A549 (cell line): ENCODE measurements at regions of chr1 and their contacts with region 1.

Region 1: GRCh38 chr1:28877132-28877781 is 37.1 kb upstream of the EPB41 start:
- DNase-seq: peak; percentile 66 to 73
- ATAC-seq: peak; percentile 80 to 86
- H3K4me3 ChIP-seq: no peak overlapping the region
- H3K27ac ChIP-seq: no peak overlapping the region
- H3K4me1 ChIP-seq: peaks cover 6% of the 10 kb centered on the region; the same call in 2 of the 3 replicates
- CTCF ChIP-seq: peak; percentile 73
- EP300 ChIP-seq: no peak
- POLR2A ChIP-seq: no peak
- RAD21 ChIP-seq: peak; percentile 92 to 97

Region 2: DNA sequence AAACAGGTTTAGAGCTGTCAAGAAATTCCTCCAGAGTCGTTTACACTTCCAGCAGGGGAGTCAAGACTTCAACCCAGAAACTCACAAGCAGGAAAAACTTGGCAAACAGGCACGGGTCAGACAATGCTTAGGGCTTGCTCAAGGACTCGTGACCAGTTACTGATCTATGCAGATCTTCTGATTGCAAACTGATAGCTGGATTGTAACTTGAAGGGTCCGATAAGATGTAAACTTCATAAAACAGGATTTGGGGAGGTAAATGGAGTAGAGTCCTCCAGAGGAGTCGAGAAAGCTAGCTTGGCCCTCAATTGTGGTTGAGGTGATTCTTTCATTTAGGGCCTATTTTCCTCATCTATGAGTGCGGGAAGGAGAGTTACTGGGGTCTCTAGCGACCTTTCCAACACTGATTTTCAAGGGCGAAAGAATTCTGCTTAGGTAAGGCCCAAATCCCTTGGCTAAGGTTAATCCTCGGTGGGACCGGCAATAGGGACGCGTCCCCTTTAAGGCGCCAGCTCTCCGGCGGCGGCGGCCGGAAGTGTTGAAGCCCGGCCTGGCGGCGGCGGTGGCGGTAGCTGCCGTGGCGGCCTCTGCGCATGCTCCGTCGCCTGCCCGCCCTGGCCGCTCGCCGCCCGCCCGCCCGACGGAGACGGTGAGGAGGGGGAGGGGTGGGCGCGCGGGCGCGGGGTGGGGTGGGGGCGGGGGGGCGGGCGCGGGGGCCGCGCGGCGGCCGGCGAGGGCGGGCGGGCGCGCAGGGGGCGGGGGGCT is 208.9 kb before region 1 on chr1 and contains the start of gene GMEB1:
- CTCF ChIA-PET with region 1: interaction called, 6 read pairs
- POLR2A ChIA-PET with region 1: interaction called, 13 read pairs
- DNase-seq: peak; percentile 69 to 87
- ATAC-seq: peak; percentile 89 to 94
- H3K4me3 ChIP-seq: peak within 1 kb of the TSS; percentile 100
- H3K27ac ChIP-seq: peak within 1 kb of the TSS; percentile 100
- H3K4me1 ChIP-seq: peaks cover 4% of the 10 kb centered on the region; the same call in 1 of the 3 replicates
- CTCF ChIP-seq: no peak
- EP300 ChIP-seq: no peak
- POLR2A ChIP-seq: no peak
- RAD21 ChIP-seq: no peak
- polyA plus RNA-seq, gene GMEB1: 6.9 and 7.1 TPM in 2 replicates

Region 3: GRCh38 chr1:28796352-28797211 is 80.7 kb before region 1 on chr1:
- CTCF ChIA-PET with region 1: interaction called, 12 read pairs
- POLR2A ChIA-PET with region 1: no interaction called
- DNase-seq: no peak
- ATAC-seq: peak in 1 of 2 experiments; percentile 51; a peak in 3 of 6 replicates
- H3K4me3 ChIP-seq: no peak overlapping the region
- H3K27ac ChIP-seq: no peak overlapping the region
- H3K4me1 ChIP-seq: no peaks in the 10 kb centered on the region
- CTCF ChIP-seq: no peak
- EP300 ChIP-seq: no peak
- POLR2A ChIP-seq: no peak
- RAD21 ChIP-seq: peak in 1 of 2 experiments; percentile 36; a peak in 1 of 5 replicates

Region 4: GRCh38 chr1:28865997-28866650 is 11.1 kb before region 1 on chr1:
- CTCF ChIA-PET with region 1: interaction called, 25 read pairs
- POLR2A ChIA-PET with region 1: no interaction called
- DNase-seq: no peak
- ATAC-seq: peak; percentile 65 to 70; a peak in 5 of 6 replicates
- H3K4me3 ChIP-seq: no peak overlapping the region
- H3K27ac ChIP-seq: no peak overlapping the region
- H3K4me1 ChIP-seq: peaks cover 9% of the 10 kb centered on the region
- CTCF ChIP-seq: no peak
- EP300 ChIP-seq: no peak
- POLR2A ChIP-seq: no peak
- RAD21 ChIP-seq: no peak

Region 5: DNA sequence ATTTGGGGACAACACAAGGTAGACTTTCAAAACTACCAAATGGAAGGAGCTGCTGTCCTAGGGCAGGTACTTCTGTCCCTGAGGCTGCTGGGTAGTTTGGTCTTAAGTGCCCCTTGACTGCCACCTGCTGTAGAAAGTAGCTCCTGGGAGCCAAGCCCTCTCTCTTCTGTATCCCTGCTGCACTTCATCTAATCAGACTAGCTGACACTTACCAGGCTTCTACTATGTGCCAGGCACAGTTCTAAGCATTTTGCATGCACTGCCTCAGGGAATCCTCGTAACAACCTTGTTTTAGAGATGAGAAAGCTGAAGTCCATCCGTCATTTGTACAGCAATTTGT is 320.3 kb after region 1 on chr1:
- CTCF ChIA-PET with region 1: interaction called, 23 read pairs
- POLR2A ChIA-PET with region 1: interaction called, 3 read pairs
- DNase-seq: peak; percentile 21 to 64
- ATAC-seq: peak; percentile 93 to 95
- H3K4me3 ChIP-seq: no peak overlapping the region
- H3K27ac ChIP-seq: no peak overlapping the region
- H3K4me1 ChIP-seq: peaks cover 10% of the 10 kb centered on the region
- CTCF ChIP-seq: peak; percentile 35; the same call in 2 of the 3 replicates
- EP300 ChIP-seq: no peak
- POLR2A ChIP-seq: no peak
- RAD21 ChIP-seq: peak; percentile 28 to 44; a peak in 4 of 5 replicates

Region 6: DNA sequence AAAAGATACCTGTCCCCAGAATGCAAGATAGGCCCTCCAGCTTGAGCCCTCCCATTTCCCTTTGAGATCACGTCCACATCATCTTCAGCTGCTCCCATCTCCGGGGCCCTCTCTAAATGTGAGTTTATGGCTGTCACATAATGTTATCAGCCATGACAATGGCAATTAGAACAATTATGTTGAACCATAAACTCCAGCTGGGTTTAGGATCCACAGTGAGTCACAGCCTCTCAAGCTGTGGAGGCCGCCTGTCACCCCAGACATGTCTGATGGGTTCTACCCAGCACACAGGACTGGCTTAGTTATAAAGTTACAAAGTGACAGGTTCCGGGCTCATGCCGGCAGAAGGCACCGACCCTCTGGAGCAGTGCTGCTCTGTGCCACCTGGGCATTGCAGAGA is 956.3 kb after region 1 on chr1:
- CTCF ChIA-PET with region 1: no interaction called
- POLR2A ChIA-PET with region 1: no interaction called
- DNase-seq: no peak
- ATAC-seq: no peak
- H3K4me3 ChIP-seq: no peak overlapping the region
- H3K27ac ChIP-seq: no peak overlapping the region
- H3K4me1 ChIP-seq: no peaks in the 10 kb centered on the region
- CTCF ChIP-seq: no peak
- EP300 ChIP-seq: no peak
- POLR2A ChIP-seq: no peak
- RAD21 ChIP-seq: no peak